Right ventricle myocardium inferior (tissue), 1 donor: ENCODE measurements at regions of chr7 and their contacts with region 1.

Region 1: GRCh38 chr7:76359111-76359978 is 554 bp upstream of the YWHAG start:
- DNase-seq: peak; percentile 99
- ATAC-seq: peak; percentile 96

Region 2: DNA sequence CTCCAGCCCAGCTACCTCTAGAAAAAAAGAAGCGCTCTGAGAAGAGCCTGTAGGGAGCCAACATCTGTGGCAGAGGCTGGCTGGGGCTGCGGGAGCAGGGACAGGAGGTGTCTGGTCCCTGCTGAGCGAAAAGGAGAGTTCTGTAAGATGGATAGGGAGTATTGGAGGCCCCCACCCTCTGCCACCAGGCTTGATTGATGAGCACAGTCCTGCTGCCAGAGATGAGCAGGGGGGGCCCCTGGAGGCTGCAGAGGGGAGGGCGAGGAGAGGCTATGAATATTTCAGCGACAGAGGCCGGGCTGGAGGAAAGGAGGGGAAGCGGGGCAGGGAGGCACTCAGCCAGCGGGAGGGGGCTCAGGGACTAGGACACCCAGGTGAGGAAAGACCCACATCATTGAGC is 101.4 kb before region 1 on chr7:
- intact Hi-C with region 1: no loop called
- DNase-seq: no peak
- ATAC-seq: no peak

Region 3: GRCh38 chr7:76302347-76303201 is 56.8 kb before region 1 on chr7 and contains the start of gene HSPB1:
- intact Hi-C with region 1: loop called (anchors 10 kb)
- DNase-seq: peak; percentile 95
- ATAC-seq: peak; percentile 88
- total RNA-seq, gene HSPB1: 3,139 TPM

Region 4: DNA sequence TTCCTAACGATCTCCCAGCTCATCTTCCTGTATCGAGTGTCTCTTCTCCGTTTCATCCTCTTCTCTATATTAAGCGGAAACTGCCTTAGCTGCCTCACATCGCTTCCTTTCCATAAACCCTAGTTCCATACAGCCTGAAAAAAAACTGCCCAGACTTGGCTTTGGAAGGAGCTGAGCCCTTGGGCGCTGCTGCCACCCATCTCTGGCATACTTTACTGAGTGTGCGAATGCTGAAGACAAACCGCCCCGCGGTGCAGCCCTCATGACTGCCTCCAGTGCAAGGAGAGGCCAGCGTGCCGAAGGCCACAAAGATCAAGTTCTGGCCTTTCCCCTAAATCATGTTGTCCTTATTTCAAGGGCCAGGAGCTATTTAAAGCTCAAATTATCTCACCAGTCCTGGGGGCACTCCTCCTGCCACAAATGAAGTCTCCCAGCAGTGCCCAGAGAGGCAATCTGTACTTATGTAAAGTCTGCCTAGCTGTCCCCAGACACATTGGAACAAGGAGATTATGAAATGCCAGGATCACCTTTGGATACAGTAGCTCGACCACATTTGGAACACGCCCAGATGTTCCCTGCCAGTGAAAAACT is 25.7 kb before region 1 on chr7:
- intact Hi-C with region 1: loop called (anchors 2 kb)
- DNase-seq: peak; percentile 83
- ATAC-seq: peak; percentile 88

Region 5: DNA sequence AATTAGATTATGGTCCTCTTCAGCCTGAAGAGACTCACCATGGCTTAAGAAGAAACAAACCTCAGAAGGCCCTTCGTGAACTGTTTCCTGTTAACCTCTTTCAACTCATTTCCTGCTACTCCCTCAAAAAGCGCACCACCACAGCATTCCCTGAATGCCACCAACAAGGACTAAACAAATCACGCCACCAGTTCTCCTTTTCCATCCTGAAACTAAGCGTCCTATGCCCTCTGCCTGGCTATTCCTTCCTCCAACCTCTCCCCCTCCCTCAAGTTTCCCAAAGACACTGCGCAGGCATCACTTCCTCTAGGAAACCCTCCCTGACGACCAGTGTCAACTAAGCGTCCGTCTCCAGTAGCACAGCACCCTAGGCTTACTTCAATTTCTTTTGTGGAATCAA is 12.6 kb before region 1 on chr7:
- intact Hi-C with region 1: no loop called
- DNase-seq: no peak
- ATAC-seq: peak; percentile 19

Region 6: DNA sequence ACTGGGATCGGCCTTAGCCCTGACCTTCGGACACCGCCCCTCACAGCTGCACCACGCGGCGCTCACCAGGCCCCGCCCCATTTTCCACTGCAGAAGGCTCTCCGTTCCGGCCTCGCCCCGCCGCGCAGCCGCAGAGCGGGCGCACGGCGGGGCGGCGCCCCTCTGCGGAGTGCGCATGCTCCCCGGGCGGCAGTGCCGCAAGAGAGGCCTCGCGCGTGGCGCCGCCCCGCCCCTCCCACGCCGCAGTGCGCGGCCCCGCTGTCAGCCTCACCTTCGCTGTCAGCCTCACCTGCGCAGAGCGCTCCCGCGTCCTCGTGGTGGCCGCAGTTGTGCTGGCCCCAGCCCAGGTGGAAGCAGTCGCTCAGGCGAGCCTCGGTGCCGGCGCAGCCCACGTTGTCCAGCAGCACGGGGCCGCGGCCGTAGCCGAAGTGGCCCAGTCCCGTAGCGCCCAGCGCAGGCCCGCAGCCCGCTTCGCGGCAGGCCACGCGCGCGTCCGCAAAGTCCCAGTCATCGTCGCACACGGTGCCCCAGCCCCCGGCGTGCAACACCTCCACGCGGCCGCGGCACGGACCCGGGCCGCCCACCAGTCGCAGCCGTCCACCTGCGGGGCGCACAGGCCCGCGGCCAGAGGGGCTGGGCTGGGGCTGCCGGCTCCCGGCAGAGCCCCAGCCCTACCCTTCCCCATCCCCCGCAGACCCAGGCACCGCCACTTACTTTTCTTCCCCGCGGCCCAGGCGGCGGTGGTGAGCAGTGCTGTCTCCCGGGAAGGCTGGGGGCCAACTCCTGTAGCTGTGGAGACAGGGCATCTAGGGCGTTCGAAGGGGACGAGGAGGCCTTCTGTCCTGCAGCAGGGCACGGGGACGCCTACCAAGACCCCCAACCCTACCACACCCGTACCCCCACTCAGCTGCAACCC is 34.0 kb after region 1 on chr7:
- intact Hi-C with region 1: loop called (anchors 1 kb)
- DNase-seq: peak; percentile 98
- ATAC-seq: peak; percentile 96